ENCODE measurements at regions of chr14 and their contacts with region 1.

Region 1: DNA sequence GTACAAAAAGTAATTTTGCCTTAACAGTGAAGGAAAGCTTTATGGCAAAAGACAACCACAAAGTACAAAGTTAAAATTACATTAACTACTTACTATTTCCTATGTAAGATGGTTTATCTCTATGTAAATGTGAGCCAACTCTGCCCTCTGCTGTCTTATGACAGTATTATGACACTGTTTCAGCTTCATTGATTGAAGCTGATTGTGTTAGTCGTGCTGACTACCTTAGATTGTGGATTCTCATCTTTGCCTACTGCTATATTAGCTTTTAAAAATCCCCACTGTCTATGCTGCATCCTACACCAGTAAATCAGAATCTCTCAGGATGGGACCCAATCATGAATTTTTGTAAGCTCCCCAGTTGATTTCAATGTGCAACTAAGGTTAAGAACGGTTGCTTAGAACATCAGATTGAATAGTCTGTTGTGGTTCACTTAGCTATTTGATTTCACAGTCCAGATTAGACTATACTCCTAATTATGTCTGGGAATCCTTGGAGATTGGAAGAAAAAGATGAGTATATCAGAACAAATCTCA is 12.2 kb upstream of the SPTB start:
- ATAC-seq: peak; percentile 71 to 93 (median 79)
- H3K4me3 ChIP-seq: no peak overlapping the region
- H3K27ac ChIP-seq: no peak overlapping the region
- H3K4me1 ChIP-seq: no peaks in the 10 kb centered on the region

Region 2: GRCh38 chr14:64540208-64541157 is 351.4 kb before region 1 on chr14 and contains the start of gene HSPA2:
- in situ Hi-C with region 1: loop called in 1 of 9 experiments (anchors 25 kb)
- ATAC-seq: peak; percentile 19 to 97 (median 94)
- H3K4me3 ChIP-seq: peak within 1 kb of the TSS in 4 of 5 donors; percentile 36 to 56 (median 45)
- H3K27ac ChIP-seq: peak within 1 kb of the TSS in 1 of 2 donors; percentile 44
- H3K4me1 ChIP-seq: no peaks in the 10 kb centered on the region
- total RNA-seq, gene HSPA2: 1.3 to 25.7 (median 5.7) TPM

Region 3: GRCh38 chr14:64671591-64671990 is 220.3 kb before region 1 on chr14:
- in situ Hi-C with region 1: loop called in 2 of 9 experiments (anchors 25 kb)
- ATAC-seq: peak in 7 of 8 experiments; percentile 37 to 77 (median 50)
- H3K4me3 ChIP-seq: no peak overlapping the region
- H3K27ac ChIP-seq: no peak overlapping the region
- H3K4me1 ChIP-seq: peaks cover 0 to 3% of the 10 kb centered on the region in 2 donors

Region 4: DNA sequence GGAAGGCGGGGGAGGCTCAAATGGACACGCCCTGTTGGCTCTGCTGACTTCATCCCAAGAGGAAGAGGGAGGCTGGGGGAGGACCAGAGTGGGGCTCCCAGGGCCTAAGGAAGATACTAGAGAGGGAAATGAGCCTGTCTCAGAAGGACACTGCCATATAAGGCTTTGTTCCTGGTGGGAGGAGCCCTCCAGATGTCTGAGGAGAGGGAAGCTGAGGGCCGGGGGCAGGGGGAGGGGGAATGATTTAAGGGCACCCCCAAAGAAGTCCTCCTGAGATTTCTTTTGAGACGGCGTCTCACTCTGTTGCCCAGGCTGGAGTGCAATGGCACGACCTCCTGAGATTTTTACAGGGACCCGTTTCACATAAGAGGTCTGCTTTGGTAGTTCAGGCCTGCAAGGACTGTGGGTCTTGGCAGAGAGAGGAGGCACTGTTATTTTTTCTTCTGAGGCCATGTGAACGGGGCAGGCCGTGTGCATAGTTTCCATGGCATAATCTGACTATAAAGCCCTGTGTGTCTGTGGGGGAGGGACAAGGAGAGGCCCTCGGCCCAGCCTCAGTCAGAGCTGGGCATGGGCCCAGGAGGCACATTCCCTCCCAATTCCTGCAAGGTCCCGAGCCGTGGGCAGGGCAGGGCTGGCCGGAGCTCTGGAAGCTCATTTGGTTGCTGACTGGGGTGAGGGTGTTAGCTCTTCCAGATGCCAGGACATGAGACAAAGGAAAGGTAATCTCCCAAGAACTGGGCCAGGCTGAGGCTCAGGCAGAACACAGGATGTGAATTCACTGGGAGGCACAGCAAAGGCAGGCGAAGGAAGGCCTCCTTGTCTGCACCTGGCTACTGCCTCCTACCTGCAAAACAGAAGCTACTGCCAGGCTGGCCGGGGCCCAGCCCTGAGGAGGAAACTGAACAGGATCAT is 209.9 kb before region 1 on chr14:
- in situ Hi-C with region 1: loop called in 1 of 9 experiments (anchors 25 kb)
- ATAC-seq: peak; percentile 75 to 91 (median 82)
- H3K4me3 ChIP-seq: no peak overlapping the region
- H3K27ac ChIP-seq: no peak overlapping the region
- H3K4me1 ChIP-seq: peaks cover 0 to 18% of the 10 kb centered on the region in 2 donors

Region 5: DNA sequence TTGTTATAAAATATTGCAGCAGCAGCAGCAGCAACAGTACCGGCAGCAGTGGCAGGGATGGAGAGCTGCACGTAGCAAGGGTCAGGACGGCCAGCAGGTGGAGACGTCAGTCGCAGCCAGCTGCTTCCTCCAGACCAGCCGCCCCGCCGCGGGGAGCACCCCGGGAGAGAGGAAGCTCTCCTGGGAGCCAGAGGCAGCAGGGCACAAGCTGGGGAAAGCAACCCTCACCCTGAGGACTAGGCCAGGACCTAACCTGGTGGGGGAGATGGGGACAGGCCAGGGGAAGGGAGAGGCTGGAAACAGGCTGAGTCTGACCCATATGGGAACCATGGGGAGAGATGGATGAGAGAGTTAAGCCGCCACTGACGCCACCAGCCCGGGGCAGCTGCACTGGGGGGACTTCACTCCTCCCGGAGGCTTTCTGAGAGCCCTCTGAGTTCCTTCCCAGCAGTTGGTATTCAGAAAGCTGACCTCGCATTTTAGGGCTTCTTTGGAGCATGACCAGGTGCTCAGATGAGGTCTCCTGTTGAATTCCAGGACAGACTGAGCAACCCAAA is 68.5 kb before region 1 on chr14:
- in situ Hi-C with region 1: loop called in 2 of 9 experiments (anchors 10 kb)
- ATAC-seq: peak; percentile 95 to 99 (median 97)
- H3K4me3 ChIP-seq: no peak overlapping the region
- H3K27ac ChIP-seq: no peak overlapping the region
- H3K4me1 ChIP-seq: peaks cover 18 to 23% of the 10 kb centered on the region in 2 donors